GM12878 (cell line): ENCODE measurements at regions of chr12 and their contacts with region 1.

Region 1: DNA sequence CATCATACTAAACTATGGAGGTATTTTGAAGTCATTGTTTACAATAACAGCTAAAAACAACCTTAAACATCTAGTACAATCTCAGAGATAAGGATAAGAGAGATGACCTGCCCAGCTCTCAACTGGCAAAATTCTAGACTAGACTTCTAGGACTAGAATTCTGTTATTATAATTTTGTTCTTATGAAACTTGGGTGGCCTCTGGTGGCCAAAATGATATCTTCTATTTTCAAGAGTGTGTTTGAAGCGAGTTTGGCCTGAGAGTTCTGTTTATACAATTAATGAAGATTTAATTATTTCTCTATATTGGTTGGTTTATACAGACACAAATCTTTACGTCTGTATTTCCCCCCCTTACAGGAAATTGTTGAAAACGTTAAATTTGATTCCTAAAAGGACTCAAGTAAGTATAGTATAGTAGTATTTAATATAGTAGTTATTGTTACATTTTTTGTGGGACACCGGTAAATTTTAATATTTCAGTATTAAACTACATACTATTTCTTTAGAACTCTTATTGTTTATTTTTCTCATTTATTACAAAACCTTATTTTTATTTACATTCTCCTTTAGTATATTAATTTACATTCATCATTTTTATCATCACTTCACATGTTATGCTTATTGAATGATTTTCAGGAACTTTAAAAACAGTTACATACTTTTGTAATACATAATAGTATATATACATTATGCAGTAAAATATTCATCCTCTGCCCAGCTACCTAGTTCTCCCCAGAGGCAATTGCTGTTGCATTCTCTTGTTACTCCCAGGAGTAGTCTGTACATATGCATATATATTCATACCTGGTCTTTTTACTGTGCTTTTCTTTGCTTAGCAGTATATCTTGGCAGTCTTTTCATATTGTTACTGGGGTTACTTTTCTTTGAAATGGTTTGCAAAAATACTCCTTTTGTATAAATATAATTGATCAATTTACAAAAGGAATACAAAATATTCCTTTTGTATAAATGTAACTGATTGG is 6.6 kb downstream of the PPHLN1 start:
- DNase-seq: no peak
- ATAC-seq: peak; percentile 81
- H3K4me3 ChIP-seq: no peak overlapping the region
- H3K27ac ChIP-seq: no peak overlapping the region
- H3K4me1 ChIP-seq: peaks cover 2% of the 10 kb centered on the region
- H3K27me3 ChIP-seq: no peaks in the 10 kb centered on the region
- CTCF ChIP-seq: peak; percentile 50 to 67 (median 53)
- EP300 ChIP-seq: no peak
- POLR2A ChIP-seq: no peak
- RAD21 ChIP-seq: peak; percentile 88

Region 2: GRCh38 chr12:40681148-40681547 is 1651.4 kb before region 1 on chr12:
- CTCF ChIA-PET with region 1: no interaction called
- POLR2A ChIA-PET with region 1: no interaction called
- RAD21 ChIA-PET with region 1: no interaction called
- SMC1A ChIA-PET with region 1: no interaction called
- in situ Hi-C with region 1: no loop called
- intact Hi-C with region 1: no loop called
- DNase-seq: no peak
- ATAC-seq: peak; percentile 75
- H3K4me3 ChIP-seq: no peak overlapping the region
- H3K27ac ChIP-seq: no peak overlapping the region
- H3K4me1 ChIP-seq: no peaks in the 10 kb centered on the region
- H3K27me3 ChIP-seq: 0 out of 4 replicates have a peak, but pooled peaks cover 0 to 2% of the 10 kb centered on the region in 2 experiments
- CTCF ChIP-seq: no peak
- EP300 ChIP-seq: no peak
- POLR2A ChIP-seq: no peak
- RAD21 ChIP-seq: no peak

Region 3: GRCh38 chr12:42129595-42130204 is 202.9 kb before region 1 on chr12:
- CTCF ChIA-PET with region 1: interaction called, 11 read pairs
- POLR2A ChIA-PET with region 1: no interaction called
- RAD21 ChIA-PET with region 1: interaction called, 4 read pairs
- SMC1A ChIA-PET with region 1: interaction called, 14 read pairs
- in situ Hi-C with region 1: loop called (anchors 5 kb)
- intact Hi-C with region 1: loop called (anchors 2 kb)
- DNase-seq: no peak
- ATAC-seq: peak; percentile 32; the same call in 2 of the 3 replicates
- H3K4me3 ChIP-seq: no peak overlapping the region
- H3K27ac ChIP-seq: no peak overlapping the region
- H3K4me1 ChIP-seq: no peaks in the 10 kb centered on the region
- H3K27me3 ChIP-seq: no peaks in the 10 kb centered on the region
- CTCF ChIP-seq: peak; percentile 36 to 69 (median 47); a peak in 5 of 6 replicates
- EP300 ChIP-seq: no peak
- POLR2A ChIP-seq: no peak
- RAD21 ChIP-seq: peak; percentile 92